Heart left ventricle (tissue), 16 donors: ENCODE measurements at regions of chr18 and their contacts with region 1.

Region 1: DNA sequence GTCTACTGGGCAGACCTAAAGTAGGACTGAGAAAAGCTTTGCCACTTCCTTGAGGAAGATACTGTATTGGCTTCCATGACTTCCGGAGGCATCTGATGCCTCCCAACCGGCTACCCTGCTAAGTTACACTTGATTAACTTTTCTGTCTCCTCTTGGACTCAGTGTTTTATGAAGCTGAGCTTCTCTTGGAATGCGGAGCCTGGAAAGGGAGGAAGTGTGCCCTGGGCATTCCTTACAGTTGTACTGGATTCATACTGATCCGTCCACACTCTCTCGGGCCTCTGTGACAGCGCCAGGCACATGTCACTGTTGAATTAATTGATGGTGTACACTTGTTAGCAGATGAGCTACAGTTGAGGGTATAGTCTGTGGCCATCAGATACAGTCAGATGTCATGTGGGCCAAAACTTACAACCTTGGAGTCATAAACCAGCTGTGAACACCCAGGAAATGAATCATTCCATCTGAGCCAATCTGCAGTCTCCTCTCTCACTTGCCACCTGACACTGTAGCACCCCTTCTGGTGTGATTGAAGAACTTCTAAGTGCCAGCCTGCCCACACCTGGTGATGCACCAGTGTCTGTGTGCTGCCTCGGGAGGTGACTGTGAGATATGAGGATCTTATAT is 122.5 kb downstream of the FHOD3 start:
- DNase-seq: no peak
- ATAC-seq: peak in 3 of 4 donors; percentile 15 to 31 (median 27)
- H3K4me3 ChIP-seq: no peak overlapping the region
- H3K27ac ChIP-seq: peak overlapping the region; percentile 10 to 89 (median 76)
- H3K4me1 ChIP-seq: peaks cover 0 to 81% (median 32%) of the 10 kb centered on the region in 12 donors
- H3K27me3 ChIP-seq: no peaks in the 10 kb centered on the region
- CTCF ChIP-seq: peak in 3 of 12 donors; percentile 4 to 16 (median 7)
- POLR2A ChIP-seq: no peak

Region 2: GRCh38 chr18:36047521-36047920 is 372.5 kb before region 1 on chr18:
- intact Hi-C with region 1: no loop called
- DNase-seq: no peak
- ATAC-seq: no peak
- H3K4me3 ChIP-seq: no peak overlapping the region
- H3K27ac ChIP-seq: no peak overlapping the region
- H3K4me1 ChIP-seq: peaks cover 0 to 14% (median 0%) of the 10 kb centered on the region in 12 donors
- H3K27me3 ChIP-seq: no peaks in the 10 kb centered on the region
- CTCF ChIP-seq: no peak
- POLR2A ChIP-seq: no peak

Region 3: DNA sequence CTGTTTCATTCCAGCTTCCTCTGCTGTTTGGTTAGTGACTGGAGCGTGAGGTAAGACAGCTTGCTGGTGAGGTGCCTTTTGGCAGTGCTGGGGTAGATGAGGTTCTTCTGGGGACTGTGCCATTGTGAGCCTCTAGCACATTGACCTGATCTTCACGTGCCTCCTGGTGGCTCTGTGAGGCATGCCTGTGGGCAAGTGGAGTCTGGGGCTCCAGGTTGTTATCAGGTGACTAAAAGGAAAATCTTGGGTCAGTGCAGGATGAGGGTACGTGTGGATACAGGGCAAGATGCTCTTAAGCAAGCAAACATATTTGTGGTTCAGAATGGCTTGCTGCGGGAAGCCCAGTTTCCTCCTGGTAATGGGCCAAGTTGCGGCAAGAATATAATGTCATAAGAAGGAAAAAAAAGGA is 47.1 kb before region 1 on chr18:
- intact Hi-C with region 1: loop called in 1 of 10 experiments (anchors 5 kb)
- DNase-seq: peak in 1 of 5 donors; percentile 34
- ATAC-seq: peak in 3 of 4 donors; percentile 37 to 74 (median 56)
- H3K4me3 ChIP-seq: no peak overlapping the region
- H3K27ac ChIP-seq: peak overlapping the region in 7 of 12 donors; percentile 4 to 68 (median 27)
- H3K4me1 ChIP-seq: peaks cover 0 to 71% (median 11%) of the 10 kb centered on the region in 12 donors
- H3K27me3 ChIP-seq: peaks cover 0 to 2% (median 0%) of the 10 kb centered on the region in 9 donors
- CTCF ChIP-seq: peak in 3 of 12 donors; percentile 11 to 23 (median 12)
- POLR2A ChIP-seq: no peak

Region 4: GRCh38 chr18:36454848-36455458 is 34.9 kb after region 1 on chr18:
- intact Hi-C with region 1: loop called in 2 of 10 experiments (anchors 5 kb)
- DNase-seq: no peak
- ATAC-seq: no peak
- H3K4me3 ChIP-seq: no peak overlapping the region
- H3K27ac ChIP-seq: peak overlapping the region in 3 of 12 donors; percentile 5 to 22 (median 7)
- H3K4me1 ChIP-seq: peaks cover 0 to 74% (median 22%) of the 10 kb centered on the region in 12 donors
- H3K27me3 ChIP-seq: no peaks in the 10 kb centered on the region
- CTCF ChIP-seq: no peak
- POLR2A ChIP-seq: no peak